GM13976 (cell line): ENCODE measurements at regions of chr20 and their contacts with region 1.

Region 1: DNA sequence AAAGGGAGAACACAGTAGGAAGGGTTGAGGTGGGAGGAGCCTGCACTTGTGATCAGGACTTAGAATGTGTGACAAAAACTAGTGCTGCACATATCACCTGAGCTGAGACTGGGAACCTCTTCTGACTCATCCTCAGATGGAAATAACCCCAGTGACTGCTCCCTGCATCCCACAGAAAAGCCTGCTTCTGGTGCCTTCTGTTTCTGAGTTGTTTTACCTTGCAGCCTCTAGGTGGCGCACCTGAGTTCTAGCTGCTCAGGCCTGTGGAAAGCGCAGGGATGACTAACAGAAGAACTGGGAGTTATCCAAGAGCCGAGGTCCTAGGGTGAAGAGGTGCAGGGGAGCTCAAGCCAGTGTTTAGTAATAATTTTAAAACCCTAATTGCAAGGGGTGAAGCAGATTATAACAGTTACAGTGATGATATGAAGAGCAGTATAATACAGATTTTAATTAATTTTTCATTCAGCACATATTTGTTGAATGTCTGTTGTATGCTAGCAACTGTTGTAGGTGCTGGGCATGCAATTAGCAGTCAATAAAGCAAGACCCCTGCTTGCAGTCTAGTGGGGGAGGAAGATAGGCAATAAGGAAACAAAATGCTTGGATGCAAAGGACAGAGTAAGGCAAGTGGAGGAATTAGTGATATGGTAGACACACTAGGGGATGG is 302.5 kb downstream of the DHX35 start:
- DNase-seq: peak; percentile 55
- CTCF ChIP-seq: peak; percentile 79

Region 2: DNA sequence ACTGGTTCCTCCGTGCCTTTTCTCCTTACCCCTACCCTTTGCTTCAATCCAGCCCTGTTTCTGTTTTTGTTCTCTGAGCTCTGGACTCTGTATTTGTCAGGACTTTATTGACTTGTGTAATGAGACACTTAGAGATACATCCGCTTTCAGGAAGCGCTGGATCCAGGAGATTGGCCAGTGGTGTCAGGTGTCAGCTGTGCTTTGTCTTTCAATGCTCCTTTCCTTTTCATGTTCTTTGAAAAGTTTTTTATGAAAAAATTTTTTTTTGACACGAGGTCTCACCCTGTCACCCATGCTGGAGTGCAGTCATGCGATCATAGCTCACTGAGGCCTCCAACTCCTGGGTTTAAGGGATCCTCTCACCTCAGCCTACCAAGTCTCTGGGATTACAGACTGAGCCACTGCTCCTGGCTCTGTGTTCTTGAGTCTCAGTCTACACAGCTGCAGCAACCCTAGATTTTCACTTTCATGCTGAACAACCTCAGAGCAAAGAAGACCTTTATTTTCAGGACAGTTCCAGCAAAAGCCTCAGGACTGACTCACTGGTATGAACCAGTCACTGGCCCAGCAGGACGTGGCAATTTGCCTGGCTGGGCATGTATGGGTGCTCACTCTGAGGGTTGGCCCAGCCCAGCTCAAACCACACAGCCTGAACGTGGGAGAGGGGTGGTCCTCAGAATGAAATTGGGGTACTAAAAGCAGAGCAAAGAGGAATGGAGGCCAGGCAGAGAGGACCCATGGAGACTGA is 194.0 kb before region 1 on chr20:
- in situ Hi-C with region 1: no loop called
- DNase-seq: no peak
- CTCF ChIP-seq: no peak

Region 3: DNA sequence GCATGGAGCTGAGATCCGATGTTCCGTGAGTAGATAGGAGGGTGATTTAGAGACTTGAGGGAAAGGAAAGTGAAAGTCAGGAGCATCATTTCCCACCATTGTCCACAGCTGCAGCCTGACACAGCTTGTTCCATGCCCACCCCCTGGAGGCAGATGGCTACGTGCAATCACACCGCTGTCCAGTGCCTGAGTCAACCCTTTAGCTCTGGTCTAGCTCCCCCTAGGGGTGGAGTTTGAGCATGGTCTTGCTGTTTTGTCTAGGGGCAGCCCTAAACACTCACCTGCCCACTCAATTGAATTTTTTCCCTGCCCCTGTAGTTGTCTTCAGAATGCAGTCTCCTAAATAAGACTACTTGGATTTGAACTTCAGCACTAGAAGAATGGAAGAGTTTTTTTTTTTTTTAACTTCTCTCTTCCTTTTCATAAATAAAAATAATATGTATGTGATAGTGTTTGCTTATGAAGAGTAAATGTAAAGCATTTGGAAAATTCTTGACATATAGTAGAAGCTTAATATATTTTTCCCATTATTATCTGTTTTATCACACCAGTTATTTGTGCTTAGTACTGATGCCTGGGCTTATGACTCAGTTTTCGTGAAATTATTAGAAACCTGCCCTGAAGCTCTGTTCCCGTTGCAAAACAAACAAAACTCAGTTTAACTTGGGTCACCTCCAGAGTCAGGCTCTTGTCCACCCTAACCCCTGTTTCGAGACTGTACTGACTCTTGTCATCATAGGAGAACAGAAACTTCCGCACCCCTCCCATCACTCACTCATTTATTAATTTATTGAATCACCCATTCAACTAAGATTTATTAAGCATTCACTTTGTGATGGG is 609.6 kb after region 1 on chr20:
- in situ Hi-C with region 1: loop called (anchors 25 kb)
- DNase-seq: peak; percentile 51
- CTCF ChIP-seq: peak; percentile 84